AG04449 (cell line): ENCODE measurements at regions of chr9 and their contacts with region 1.

Region 1: DNA sequence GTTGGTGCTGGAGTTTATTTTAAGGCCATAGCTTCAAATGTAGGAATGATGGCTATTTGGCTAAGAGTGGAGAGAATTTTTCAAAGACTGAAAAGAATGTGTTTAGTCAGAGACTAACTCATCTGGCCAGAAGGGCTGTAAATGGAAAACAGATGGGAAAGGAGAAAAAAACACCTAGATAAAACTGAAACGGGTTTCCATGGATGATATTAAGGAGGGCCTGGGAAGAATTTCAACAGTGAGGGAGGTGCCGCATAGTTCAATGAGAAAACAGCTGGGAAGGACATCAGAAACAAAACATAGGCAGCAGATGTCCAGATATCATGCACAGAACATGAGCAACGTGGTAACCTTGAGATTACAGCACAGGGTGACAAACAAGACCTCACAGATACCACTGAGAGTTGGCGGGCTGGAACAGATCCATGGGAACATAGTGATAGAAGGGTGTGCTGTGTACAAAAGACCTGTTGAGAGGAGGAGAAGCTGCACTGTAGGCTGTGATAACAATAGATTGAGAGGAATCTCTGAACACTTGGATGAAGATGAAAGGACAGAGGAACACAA is 31.2 kb upstream of the RAD23B start:
- DNase-seq: peak; percentile 83
- H3K4me3 ChIP-seq: peak overlapping the region; percentile 6; the same call in 1 of the 2 replicates
- CTCF ChIP-seq: no peak

Region 2: DNA sequence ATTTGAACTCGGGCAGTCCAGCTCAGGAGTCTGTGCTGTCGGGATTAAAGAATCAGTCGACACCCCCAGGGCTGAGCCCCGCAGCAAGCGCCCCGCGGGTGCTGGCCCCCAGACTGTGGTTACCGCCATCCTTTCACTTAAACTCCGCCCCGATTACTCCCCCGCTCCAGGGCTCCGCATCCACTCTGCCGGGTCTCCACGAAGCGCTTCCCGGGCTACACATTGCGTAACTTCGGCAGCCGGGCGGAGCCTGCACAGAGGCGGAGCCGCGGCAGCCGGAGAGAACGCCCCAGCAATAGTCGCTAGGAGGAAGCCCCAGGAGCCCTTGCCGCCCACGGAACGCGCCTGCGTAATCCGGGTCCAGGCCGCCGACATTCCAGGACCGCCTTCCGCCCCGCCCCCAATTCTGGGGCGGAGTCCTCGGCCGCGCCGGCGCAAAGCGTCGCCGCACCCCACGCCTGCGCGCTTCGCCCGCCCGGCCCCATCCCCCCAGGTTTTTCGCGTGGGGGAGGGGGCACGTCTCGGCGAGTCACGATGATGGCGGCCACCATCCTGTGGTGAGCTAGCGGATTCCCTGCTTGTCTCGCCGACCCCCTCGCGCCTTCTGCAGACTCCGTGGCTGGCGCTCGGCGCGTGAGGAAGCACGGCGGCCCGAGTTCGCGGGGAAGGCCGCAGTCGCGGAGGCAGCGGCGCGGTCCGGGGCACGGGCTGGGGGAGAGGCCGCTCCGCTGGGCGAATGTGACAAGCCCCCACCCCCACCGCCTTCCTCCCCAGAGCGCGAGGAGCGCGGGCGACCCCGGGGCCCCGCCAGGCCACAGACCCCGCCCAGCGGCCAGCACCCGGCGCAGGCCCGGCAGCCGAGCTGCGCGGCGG is 31.1 kb after region 1 on chr9 and contains the start of gene RAD23B:
- CTCF ChIA-PET with region 1: no interaction called
- POLR2A ChIA-PET with region 1: interaction called, 11 read pairs
- DNase-seq: peak; percentile 90
- H3K4me3 ChIP-seq: peak within 1 kb of the TSS; percentile 94
- CTCF ChIP-seq: no peak